K562 (cell line): ENCODE measurements at regions of chr7 and their contacts with region 1.

Region 1: GRCh38 chr7:108525985-108526767 is at the start of gene PNPLA8:
- DNase-seq: peak; percentile 96 to 100 (median 98)
- ATAC-seq: peak; percentile 95
- H3K4me3 ChIP-seq: peak within 1 kb of the TSS; percentile 67
- H3K27ac ChIP-seq: peak within 1 kb of the TSS; percentile 84
- H3K4me1 ChIP-seq: peaks cover 11 to 24% of the 10 kb centered on the region in 2 experiments; a peak in 4 of 5 replicates
- H3K27me3 ChIP-seq: no peaks in the 10 kb centered on the region
- CTCF ChIP-seq: peak in 2 of 3 experiments; percentile 10 to 20; a peak in 1 of 6 replicates
- EP300 ChIP-seq: no peak; the same call in 1 of the 2 replicates
- POLR2A ChIP-seq: peak; percentile 96
- RAD21 ChIP-seq: peak in 1 of 2 experiments; percentile 5; a peak in 1 of 4 replicates
- polyA plus RNA-seq, gene PNPLA8: 15.9 to 17.4 TPM

Region 2: GRCh38 chr7:108511939-108512338 is 14.2 kb before region 1 on chr7:
- CTCF ChIA-PET with region 1: no interaction called
- POLR2A ChIA-PET with region 1: interaction called, 12 read pairs
- in situ Hi-C with region 1: no loop called
- intact Hi-C with region 1: no loop called
- DNase-seq: no peak
- ATAC-seq: no peak
- H3K4me3 ChIP-seq: no peak overlapping the region
- H3K27ac ChIP-seq: no peak overlapping the region
- H3K4me1 ChIP-seq: no peaks in the 10 kb centered on the region
- H3K27me3 ChIP-seq: no peaks in the 10 kb centered on the region
- CTCF ChIP-seq: no peak
- EP300 ChIP-seq: no peak
- POLR2A ChIP-seq: no peak
- RAD21 ChIP-seq: no peak

Region 3: DNA sequence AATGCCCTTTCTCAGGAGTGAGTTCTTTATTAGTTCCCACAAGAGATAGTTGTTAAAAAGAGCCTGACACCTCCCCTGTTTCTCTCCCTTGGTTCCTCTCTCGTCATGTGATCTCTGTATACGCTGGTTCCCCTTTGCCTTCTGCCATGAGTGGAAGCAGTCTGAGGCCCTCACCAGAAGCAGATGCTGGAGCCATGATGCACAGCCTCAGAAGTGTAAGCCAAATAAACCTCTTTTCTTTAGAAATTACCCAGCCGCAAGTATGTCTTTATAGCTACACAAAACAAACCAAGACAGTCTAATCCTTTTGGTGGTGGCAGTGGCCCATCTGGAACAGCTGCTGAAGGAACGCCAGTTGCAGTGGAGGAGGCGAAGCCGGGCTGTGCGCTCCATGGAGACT is 52.8 kb after region 1 on chr7:
- CTCF ChIA-PET with region 1: no interaction called
- POLR2A ChIA-PET with region 1: no interaction called
- in situ Hi-C with region 1: no loop called
- intact Hi-C with region 1: no loop called
- DNase-seq: no peak
- ATAC-seq: no peak
- H3K4me3 ChIP-seq: no peak overlapping the region
- H3K27ac ChIP-seq: no peak overlapping the region
- H3K4me1 ChIP-seq: no peaks in the 10 kb centered on the region; a peak in 1 of 5 replicates
- H3K27me3 ChIP-seq: no peaks in the 10 kb centered on the region
- CTCF ChIP-seq: no peak
- EP300 ChIP-seq: no peak
- POLR2A ChIP-seq: no peak
- RAD21 ChIP-seq: no peak